ENCODE measurements at regions of chrX and their contacts with region 1.

Region 1: GRCh38 chrX:134484039-134484438 is 24.1 kb downstream of the HPRT1 start:
- DNase-seq: peak in 1 of 2 donors; percentile 60
- ATAC-seq: peak in 2 of 3 donors; percentile 48 to 59
- H3K4me3 ChIP-seq: no peak overlapping the region
- H3K4me3 Mint-ChIP-seq: no peak overlapping the region
- H3K27ac ChIP-seq: no peak overlapping the region
- H3K27ac Mint-ChIP-seq: no peak overlapping the region
- H3K4me1 ChIP-seq: no peaks in the 10 kb centered on the region
- H3K4me1 Mint-ChIP-seq: no peaks in the 10 kb centered on the region
- H3K27me3 ChIP-seq: no peaks in the 10 kb centered on the region
- H3K27me3 Mint-ChIP-seq: no peaks in the 10 kb centered on the region
- CTCF ChIP-seq: peak; percentile 52

Region 2: GRCh38 chrX:134718105-134718965 is 234.3 kb after region 1 on chrX:
- intact Hi-C with region 1: no loop called
- DNase-seq: no peak
- ATAC-seq: peak; percentile 55 to 67 (median 58)
- H3K4me3 ChIP-seq: no peak overlapping the region
- H3K4me3 Mint-ChIP-seq: no peak overlapping the region
- H3K27ac ChIP-seq: no peak overlapping the region
- H3K27ac Mint-ChIP-seq: peak overlapping the region; percentile 35 to 86
- H3K4me1 ChIP-seq: peaks cover 8% of the 10 kb centered on the region
- H3K4me1 Mint-ChIP-seq: peaks cover 10 to 14% of the 10 kb centered on the region in 2 donors
- H3K27me3 ChIP-seq: no peaks in the 10 kb centered on the region
- H3K27me3 Mint-ChIP-seq: peaks cover 0 to under 1% of the 10 kb centered on the region in 2 donors
- CTCF ChIP-seq: no peak

Region 3: DNA sequence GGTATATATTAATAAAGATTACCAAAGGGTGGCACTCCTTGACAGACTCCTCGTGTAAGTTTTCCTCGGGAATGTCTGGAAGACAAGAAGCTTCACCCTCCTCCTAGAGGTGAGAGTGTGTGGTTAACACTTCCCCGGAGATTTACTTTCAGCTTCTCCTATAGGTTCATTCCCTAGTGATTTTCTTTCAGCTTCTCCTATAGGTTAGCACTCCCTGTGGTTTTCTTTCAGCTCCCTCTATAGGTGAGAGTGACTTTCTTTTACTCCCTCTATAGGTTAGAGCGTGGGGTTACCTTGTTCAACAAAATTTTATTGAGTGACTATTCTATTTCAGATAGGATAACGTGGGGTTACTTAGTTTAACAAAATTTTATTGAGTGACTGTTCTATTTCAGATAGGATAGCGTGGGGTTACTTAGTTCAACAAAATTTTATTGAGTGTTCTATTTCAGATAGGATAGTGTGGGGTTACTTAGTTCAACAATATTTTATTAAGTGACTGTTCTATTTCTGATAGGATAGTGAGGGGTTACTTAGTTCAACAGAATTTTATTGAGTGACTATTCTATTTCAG is 280.3 kb after region 1 on chrX:
- intact Hi-C with region 1: loop called (anchors 5 kb)
- DNase-seq: peak in 1 of 2 donors; percentile 27
- ATAC-seq: peak; percentile 55 to 72 (median 59)
- H3K4me3 ChIP-seq: no peak overlapping the region
- H3K4me3 Mint-ChIP-seq: no peak overlapping the region
- H3K27ac ChIP-seq: no peak overlapping the region
- H3K27ac Mint-ChIP-seq: no peak overlapping the region
- H3K4me1 ChIP-seq: no peaks in the 10 kb centered on the region
- H3K4me1 Mint-ChIP-seq: no peaks in the 10 kb centered on the region
- H3K27me3 ChIP-seq: no peaks in the 10 kb centered on the region
- H3K27me3 Mint-ChIP-seq: no peaks in the 10 kb centered on the region
- CTCF ChIP-seq: no peak